ENCODE measurements at regions of chr11 and their contacts with region 1.

Region 1: GRCh38 chr11:107858217-107859070 is at the start of gene SLC35F2:
- DNase-seq: peak; percentile 88
- H3K4me3 Mint-ChIP-seq: peak within 1 kb of the TSS; percentile 91
- H3K27ac Mint-ChIP-seq: peak within 1 kb of the TSS; percentile 85
- H3K4me1 Mint-ChIP-seq: peaks cover 21% of the 10 kb centered on the region
- H3K27me3 Mint-ChIP-seq: no peaks in the 10 kb centered on the region
- CTCF ChIP-seq: no peak
- total RNA-seq, gene SLC35F2: 40.3 and 62.4 TPM in 2 replicates

Region 2: DNA sequence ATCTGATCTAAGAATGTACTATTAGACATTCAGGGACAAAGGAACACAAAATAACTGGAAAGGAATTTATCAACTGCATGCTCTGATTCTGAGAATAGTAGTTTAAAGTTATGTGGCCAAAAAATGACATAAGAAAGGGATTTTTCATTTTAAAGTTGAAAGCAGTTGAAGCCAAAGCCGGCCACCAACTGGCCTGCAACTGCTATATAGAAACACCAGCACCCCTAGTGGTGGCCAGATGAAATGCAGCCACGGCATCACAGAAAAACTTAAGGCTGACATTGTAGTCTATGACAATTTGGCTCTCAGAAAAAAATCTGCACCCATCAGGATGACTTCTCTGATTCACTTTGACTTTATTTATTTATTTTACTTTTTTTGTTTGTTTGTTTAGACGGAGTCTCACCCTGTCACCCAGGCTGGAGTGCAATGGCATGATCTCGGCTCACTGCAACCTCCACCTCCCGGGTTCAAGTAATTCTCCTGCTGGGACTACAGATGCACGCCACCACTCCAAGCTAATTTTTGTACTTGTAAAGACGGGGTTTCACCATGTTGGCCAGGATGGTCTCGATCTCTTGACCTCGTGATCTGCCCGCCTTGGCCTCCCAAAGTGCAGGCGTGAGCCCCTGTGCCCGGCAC is 59.1 kb before region 1 on chr11:
- CTCF ChIA-PET with region 1: interaction called, 4 read pairs
- POLR2A ChIA-PET with region 1: interaction called, 3 read pairs
- intact Hi-C with region 1: loop called (anchors 1 kb)
- DNase-seq: peak; percentile 67
- H3K4me3 Mint-ChIP-seq: no peak overlapping the region
- H3K27ac Mint-ChIP-seq: no peak overlapping the region
- H3K4me1 Mint-ChIP-seq: no peaks in the 10 kb centered on the region
- H3K27me3 Mint-ChIP-seq: no peaks in the 10 kb centered on the region
- CTCF ChIP-seq: peak; percentile 91

Region 3: GRCh38 chr11:107819361-107820014 is 39.0 kb before region 1 on chr11:
- CTCF ChIA-PET with region 1: interaction called, 3 read pairs
- POLR2A ChIA-PET with region 1: interaction called, 6 read pairs
- intact Hi-C with region 1: loop called (anchors 5 kb)
- DNase-seq: peak; percentile 53
- H3K4me3 Mint-ChIP-seq: no peak overlapping the region
- H3K27ac Mint-ChIP-seq: peak overlapping the region; percentile 63
- H3K4me1 Mint-ChIP-seq: peaks cover 42% of the 10 kb centered on the region
- H3K27me3 Mint-ChIP-seq: no peaks in the 10 kb centered on the region
- CTCF ChIP-seq: no peak

Region 4: GRCh38 chr11:107830915-107831540 is 27.4 kb before region 1 on chr11:
- CTCF ChIA-PET with region 1: interaction called, 3 read pairs
- POLR2A ChIA-PET with region 1: interaction called, 11 read pairs
- intact Hi-C with region 1: no loop called
- DNase-seq: peak; percentile 46
- H3K4me3 Mint-ChIP-seq: peak overlapping the region; percentile 16
- H3K27ac Mint-ChIP-seq: peak overlapping the region; percentile 76
- H3K4me1 Mint-ChIP-seq: peaks cover 34% of the 10 kb centered on the region
- H3K27me3 Mint-ChIP-seq: no peaks in the 10 kb centered on the region
- CTCF ChIP-seq: no peak

Region 5: GRCh38 chr11:107840129-107840484 is 18.3 kb before region 1 on chr11:
- CTCF ChIA-PET with region 1: interaction called, 3 read pairs
- POLR2A ChIA-PET with region 1: interaction called, 95 read pairs
- intact Hi-C with region 1: loop called (anchors 1 kb)
- DNase-seq: peak; percentile 86
- H3K4me3 Mint-ChIP-seq: peak overlapping the region; percentile 51
- H3K27ac Mint-ChIP-seq: peak overlapping the region; percentile 84
- H3K4me1 Mint-ChIP-seq: peaks cover 31% of the 10 kb centered on the region
- H3K27me3 Mint-ChIP-seq: no peaks in the 10 kb centered on the region
- CTCF ChIP-seq: no peak

Region 6: DNA sequence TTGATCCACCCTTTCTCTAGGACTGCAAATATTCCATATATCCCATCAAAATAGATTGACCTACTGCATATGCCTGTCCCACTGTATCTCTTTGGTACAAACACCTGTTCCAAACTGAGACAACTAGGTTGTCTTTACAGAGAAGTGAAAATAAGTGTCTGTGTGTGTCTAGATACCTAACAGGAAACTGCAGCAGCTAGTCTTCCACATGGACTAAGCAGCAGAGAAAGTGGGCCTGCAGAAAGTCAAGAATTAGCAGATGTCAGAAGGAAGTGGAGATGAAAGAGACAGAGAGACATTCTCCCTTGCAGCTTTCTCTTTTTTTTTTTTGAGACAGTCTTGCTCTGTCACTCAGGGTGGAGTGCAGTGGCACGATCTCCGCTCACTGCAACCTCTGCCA is 65.9 kb after region 1 on chr11:
- CTCF ChIA-PET with region 1: no interaction called
- POLR2A ChIA-PET with region 1: no interaction called
- intact Hi-C with region 1: no loop called
- DNase-seq: no peak
- H3K4me3 Mint-ChIP-seq: no peak overlapping the region
- H3K27ac Mint-ChIP-seq: no peak overlapping the region
- H3K4me1 Mint-ChIP-seq: peaks cover 12% of the 10 kb centered on the region
- H3K27me3 Mint-ChIP-seq: peaks cover 49% of the 10 kb centered on the region
- CTCF ChIP-seq: no peak

Region 7: GRCh38 chr11:108008656-108009496 is 150.4 kb after region 1 on chr11 and contains the start of gene CUL5:
- CTCF ChIA-PET with region 1: interaction called, 3 read pairs
- POLR2A ChIA-PET with region 1: interaction called, 14 read pairs
- intact Hi-C with region 1: no loop called
- DNase-seq: peak; percentile 90
- H3K4me3 Mint-ChIP-seq: peak within 1 kb of the TSS; percentile 86
- H3K27ac Mint-ChIP-seq: peak within 1 kb of the TSS; percentile 98
- H3K4me1 Mint-ChIP-seq: peaks cover 17% of the 10 kb centered on the region
- H3K27me3 Mint-ChIP-seq: no peaks in the 10 kb centered on the region
- CTCF ChIP-seq: peak; percentile 84
- total RNA-seq, gene CUL5: 31.8 and 37.5 TPM in 2 replicates